CD8-positive, alpha-beta T cell (primary cell): ENCODE measurements at regions of chr4 and their contacts with region 1.

Region 1: GRCh38 chr4:2968381-2968780 is 5.0 kb downstream of the GRK4 start:
- DNase-seq: no peak
- ATAC-seq: no peak
- H3K4me3 ChIP-seq: no peak overlapping the region
- H3K4me3 Mint-ChIP-seq: no peak overlapping the region
- H3K27ac ChIP-seq: no peak overlapping the region
- H3K27ac Mint-ChIP-seq: no peak overlapping the region
- H3K4me1 ChIP-seq: peaks cover 7% of the 10 kb centered on the region
- H3K4me1 Mint-ChIP-seq: peaks cover 9% of the 10 kb centered on the region
- H3K27me3 ChIP-seq: no peaks in the 10 kb centered on the region
- H3K27me3 Mint-ChIP-seq: no peaks in the 10 kb centered on the region
- CTCF ChIP-seq: no peak

Region 2: GRCh38 chr4:3531879-3532713 is 563.7 kb after region 1 on chr4 and contains the start of gene LRPAP1:
- CTCF ChIA-PET with region 1: no interaction called
- POLR2A ChIA-PET with region 1: no interaction called
- intact Hi-C with region 1: loop called in 1 of 2 experiments (anchors 5 kb)
- DNase-seq: peak; percentile 63 to 92 (median 86)
- ATAC-seq: peak; percentile 94
- H3K4me3 ChIP-seq: peak within 1 kb of the TSS; percentile 90 to 93
- H3K4me3 Mint-ChIP-seq: peak within 1 kb of the TSS; percentile 98
- H3K27ac ChIP-seq: peak within 1 kb of the TSS; percentile 58 to 76
- H3K27ac Mint-ChIP-seq: peak within 1 kb of the TSS; percentile 96
- H3K4me1 ChIP-seq: peaks cover 35% of the 10 kb centered on the region
- H3K4me1 Mint-ChIP-seq: peaks cover 39% of the 10 kb centered on the region
- H3K27me3 ChIP-seq: no peaks in the 10 kb centered on the region
- H3K27me3 Mint-ChIP-seq: no peaks in the 10 kb centered on the region
- CTCF ChIP-seq: no peak
- total RNA-seq, gene LRPAP1: 94.6 to 97.4 TPM